Posterior vena cava (tissue), 2 donors: ENCODE measurements at regions of chr3 and their contacts with region 1.

Region 1: GRCh38 chr3:15845475-15845874 is 47.7 kb upstream of the ANKRD28 start:
- DNase-seq: no peak

Region 2: DNA sequence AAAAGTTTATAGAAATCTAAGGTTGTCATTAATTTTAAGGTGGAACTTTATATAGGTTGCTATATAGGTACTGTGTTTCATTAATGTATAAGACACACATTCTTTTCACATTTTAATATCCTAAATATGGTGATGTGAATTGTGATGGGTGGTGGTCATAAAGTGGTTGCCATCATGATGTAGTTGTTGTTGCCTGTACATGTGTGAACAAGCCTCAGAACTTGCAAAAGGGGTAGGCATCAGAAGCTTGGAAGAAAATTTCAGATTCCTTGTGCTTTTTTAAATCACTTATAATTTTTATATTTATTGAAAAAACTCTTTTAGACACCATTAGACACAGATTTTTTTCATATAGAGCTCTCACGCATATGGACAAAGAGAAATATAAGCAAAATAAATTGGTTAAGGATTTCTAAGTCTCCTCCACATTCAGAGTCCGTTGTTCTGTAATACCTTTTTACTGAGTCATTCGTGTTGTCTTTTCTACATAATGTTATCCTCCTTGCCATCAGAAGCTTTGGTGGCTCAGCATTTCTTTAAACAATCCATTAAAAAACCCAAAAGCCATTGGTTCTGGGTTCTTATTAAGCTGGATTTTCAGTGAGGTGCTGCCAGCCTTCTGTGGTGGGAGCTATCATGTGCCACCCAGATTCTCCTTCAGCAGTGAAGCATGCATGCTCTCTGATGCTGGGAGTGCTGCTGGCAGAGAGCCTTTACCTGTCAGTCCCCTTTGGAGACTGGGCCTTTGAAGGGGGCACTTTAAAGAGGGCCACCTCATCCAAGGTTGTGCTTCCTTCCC is 188.6 kb after region 1 on chr3:
- intact Hi-C with region 1: loop called in 1 of 2 experiments (anchors 10 kb)
- DNase-seq: no peak